Lower leg skin (tissue), 4 donors: ENCODE measurements at regions of chr16 and their contacts with region 1.

Region 1: GRCh38 chr16:55543472-55543871 is 23.0 kb upstream of the CAPNS2 start:
- DNase-seq: no peak
- H3K4me3 ChIP-seq: no peak overlapping the region
- CTCF ChIP-seq: no peak
- POLR2A ChIP-seq: no peak

Region 2: DNA sequence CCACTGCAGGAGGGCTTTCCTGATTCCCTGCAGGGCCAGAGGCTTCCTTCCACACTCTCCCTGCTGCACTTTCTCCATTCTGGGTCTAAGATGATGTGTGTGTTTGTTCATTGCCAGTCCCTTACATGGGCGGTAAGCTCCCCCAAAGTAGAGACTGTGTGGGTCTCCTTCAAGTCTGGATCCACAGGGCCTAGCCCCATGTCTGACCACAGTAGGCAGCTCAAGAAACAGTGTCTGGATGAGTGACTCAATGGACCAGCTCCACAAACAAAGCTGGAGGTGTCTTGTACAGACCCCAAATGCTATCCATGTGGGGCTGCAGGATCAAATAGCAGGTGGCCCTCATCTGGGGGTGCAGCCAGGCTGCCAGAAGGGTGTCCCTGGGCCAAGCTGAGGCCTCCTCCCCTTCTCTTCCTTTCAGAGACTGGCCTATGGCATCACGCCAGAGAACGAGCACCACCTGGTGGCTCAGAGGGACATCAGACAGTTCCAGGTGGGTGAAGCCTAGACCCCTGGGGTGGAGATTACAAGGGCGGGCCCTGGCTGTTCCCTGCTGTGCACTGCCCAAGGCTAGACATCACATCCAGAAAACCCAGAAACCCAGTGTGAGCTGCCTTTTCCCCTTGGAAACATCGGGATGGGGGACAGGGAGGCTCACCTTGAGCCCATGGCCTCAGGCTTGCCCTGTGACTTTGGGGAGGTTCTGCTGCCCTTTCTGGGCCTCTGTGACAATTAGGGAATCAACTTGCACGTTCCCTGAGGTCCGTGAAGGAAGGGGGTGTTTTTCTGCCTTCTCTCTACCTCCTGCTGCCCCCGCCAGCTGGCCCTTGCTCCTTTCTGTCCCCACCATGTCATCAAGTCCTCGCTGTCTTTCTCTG is 158.2 kb after region 1 on chr16:
- intact Hi-C with region 1: loop called (anchors 5 kb)
- DNase-seq: peak in 1 of 2 donors; percentile 90
- H3K4me3 ChIP-seq: no peak overlapping the region
- CTCF ChIP-seq: peak in 1 of 3 donors; percentile 32
- POLR2A ChIP-seq: no peak